ENCODE measurements at regions of chr9 and their contacts with region 1.

Region 1: DNA sequence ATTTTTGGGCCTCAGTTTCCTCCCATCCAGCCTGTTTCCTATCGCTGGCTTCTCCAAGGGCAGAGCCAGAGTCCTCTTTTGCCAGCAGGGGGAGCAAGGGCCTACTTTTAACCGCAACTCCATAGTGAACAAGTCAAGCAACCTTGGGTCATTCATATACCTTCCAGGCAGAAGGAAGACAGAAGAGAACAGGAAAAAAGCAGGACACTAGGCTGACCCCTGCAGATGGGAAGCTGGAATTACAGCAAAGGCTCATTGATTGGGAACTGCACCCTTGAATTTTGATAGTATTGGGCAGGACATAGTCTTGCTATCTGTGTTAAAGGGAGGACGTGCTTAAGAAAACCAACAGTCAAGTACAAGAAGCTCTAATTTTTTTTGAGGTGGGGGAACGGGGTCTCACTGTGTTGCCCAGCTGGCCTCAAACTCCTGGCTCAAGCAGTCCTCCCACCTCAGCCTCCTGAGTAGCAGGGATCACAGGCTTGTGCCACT is 30.1 kb downstream of the QRFP start:
- DNase-seq: peak; percentile 84 to 90 (median 88)
- ATAC-seq: peak; percentile 95
- H3K4me3 ChIP-seq: no peak overlapping the region
- H3K27ac ChIP-seq: no peak overlapping the region
- H3K4me1 ChIP-seq: peaks cover 9% of the 10 kb centered on the region
- H3K27me3 ChIP-seq: no peaks in the 10 kb centered on the region
- CTCF ChIP-seq: peak; percentile 84 to 98 (median 95)
- POLR2A ChIP-seq: no peak

Region 2: DNA sequence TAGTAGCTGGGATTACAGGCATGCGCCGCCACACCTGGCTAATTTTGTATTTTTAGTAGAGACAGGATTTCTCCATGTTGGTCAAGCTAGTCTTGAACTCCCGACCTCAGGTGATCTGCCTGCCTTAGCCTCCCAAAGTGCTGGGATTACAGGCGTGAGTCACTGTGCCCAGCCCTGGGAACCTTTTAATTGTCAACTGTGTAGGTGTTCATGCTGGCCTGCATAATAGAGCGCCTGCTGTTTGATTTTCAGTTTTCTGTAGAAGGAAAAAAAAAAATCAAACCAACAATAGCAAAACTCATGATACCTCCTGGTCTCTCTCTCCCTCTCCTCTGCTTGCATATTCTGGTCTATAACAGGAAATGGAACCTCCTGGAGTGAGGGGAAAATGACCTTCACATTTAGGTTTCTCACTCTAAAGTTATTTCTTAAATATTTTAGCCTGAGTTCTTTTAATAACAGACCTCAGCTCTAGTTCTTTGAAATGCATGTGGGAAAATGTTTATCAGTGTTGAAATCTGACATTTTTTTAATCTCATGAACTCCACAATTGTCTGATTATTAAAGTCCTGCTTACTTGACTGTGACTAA is 121.2 kb before region 1 on chr9:
- intact Hi-C with region 1: no loop called
- DNase-seq: no peak
- ATAC-seq: no peak
- H3K4me3 ChIP-seq: no peak overlapping the region
- H3K27ac ChIP-seq: no peak overlapping the region
- H3K4me1 ChIP-seq: peaks cover 13% of the 10 kb centered on the region
- H3K27me3 ChIP-seq: no peaks in the 10 kb centered on the region
- CTCF ChIP-seq: no peak
- POLR2A ChIP-seq: no peak

Region 3: DNA sequence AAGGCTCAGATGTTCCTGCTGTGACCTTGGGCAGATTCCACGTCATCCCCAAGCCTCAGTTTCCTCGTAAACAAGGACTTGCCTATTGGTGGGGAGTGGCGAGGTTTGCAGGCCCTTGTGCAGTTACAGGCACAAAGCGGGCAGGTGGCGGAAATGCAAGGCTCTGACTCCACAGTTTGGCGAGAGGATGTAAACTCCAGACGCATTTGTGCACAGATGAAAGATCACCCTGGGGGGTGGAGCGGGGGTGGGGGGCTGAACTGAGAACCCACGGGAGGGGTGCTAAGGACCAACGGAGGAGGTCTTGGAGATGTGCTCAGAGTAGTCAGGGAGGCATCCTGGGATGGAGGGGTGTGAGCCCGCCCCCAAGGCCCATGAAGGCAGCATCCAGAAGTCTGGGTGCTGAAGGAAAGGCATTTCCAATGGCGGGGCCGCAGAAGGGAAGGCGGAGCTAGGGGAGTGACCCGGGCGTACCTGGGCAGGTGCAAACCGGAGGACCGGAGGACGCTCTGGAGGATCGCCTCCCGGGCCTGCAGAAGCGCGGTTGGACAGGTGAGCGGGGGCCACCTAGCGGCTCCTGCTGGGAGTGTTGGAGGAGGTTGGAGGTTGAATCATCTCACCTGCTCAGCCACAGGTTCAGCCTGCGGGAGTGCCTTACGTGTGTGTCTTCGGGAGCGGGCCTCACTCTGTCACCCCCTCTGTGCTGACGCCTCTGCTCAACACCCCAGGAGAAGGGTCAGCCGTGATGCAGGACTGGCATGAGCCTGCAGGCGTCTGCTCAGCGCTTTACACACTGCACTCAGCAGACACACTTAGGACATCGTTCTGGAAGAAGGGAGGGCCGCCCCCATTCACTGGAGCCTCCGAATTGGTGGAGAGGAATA is 74.4 kb after region 1 on chr9:
- intact Hi-C with region 1: loop called (anchors 5 kb)
- DNase-seq: peak; percentile 88 to 90 (median 88)
- ATAC-seq: peak; percentile 88
- H3K4me3 ChIP-seq: no peak overlapping the region
- H3K27ac ChIP-seq: no peak overlapping the region
- H3K4me1 ChIP-seq: peaks cover 29% of the 10 kb centered on the region
- H3K27me3 ChIP-seq: peaks cover 0 to 45% of the 10 kb centered on the region in 2 donors
- CTCF ChIP-seq: peak; percentile 67 to 92 (median 90)
- POLR2A ChIP-seq: no peak